Adrenal gland (tissue), 19 donors: ENCODE measurements at regions of chr9 and their contacts with region 1.

Region 1: GRCh38 chr9:8168916-8169438 is 369.4 kb upstream of the DMAC1 start:
- DNase-seq: no peak
- H3K4me3 ChIP-seq: no peak overlapping the region
- H3K27ac ChIP-seq: no peak overlapping the region
- H3K4me1 ChIP-seq: no peaks in the 10 kb centered on the region
- H3K27me3 ChIP-seq: no peaks in the 10 kb centered on the region
- CTCF ChIP-seq: no peak
- POLR2A ChIP-seq: no peak

Region 2: GRCh38 chr9:8224381-8224801 is 55.4 kb after region 1 on chr9:
- intact Hi-C with region 1: loop called in 1 of 2 experiments (anchors 10 kb)
- DNase-seq: no peak
- H3K4me3 ChIP-seq: no peak overlapping the region
- H3K27ac ChIP-seq: no peak overlapping the region
- H3K4me1 ChIP-seq: no peaks in the 10 kb centered on the region
- H3K27me3 ChIP-seq: no peaks in the 10 kb centered on the region
- CTCF ChIP-seq: no peak
- POLR2A ChIP-seq: no peak

Region 3: DNA sequence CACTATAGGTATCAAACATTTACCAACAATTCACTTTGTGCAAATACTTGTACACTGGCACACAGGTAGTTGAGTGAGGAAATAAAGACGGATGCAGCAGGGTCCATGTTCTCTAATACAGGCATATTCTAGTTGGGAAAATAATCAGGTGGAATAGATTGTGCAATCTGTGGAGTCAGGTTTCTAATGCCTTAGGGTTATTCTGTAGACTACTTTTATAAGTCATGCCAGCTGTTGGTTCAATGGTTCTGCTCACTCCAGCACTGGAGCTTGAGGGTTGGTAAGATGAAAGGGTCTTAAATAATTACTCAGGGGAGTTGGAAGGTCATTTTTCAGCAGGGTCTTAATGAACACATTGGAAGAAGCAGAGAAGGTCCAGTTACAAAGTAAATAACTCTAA is 320.9 kb after region 1 on chr9:
- intact Hi-C with region 1: no loop called
- DNase-seq: no peak
- H3K4me3 ChIP-seq: no peak overlapping the region
- H3K27ac ChIP-seq: no peak overlapping the region
- H3K4me1 ChIP-seq: no peaks in the 10 kb centered on the region
- H3K27me3 ChIP-seq: no peaks in the 10 kb centered on the region
- CTCF ChIP-seq: no peak
- POLR2A ChIP-seq: no peak